PC-3 (cell line): ENCODE measurements at regions of chr9 and their contacts with region 1.

Region 1: DNA sequence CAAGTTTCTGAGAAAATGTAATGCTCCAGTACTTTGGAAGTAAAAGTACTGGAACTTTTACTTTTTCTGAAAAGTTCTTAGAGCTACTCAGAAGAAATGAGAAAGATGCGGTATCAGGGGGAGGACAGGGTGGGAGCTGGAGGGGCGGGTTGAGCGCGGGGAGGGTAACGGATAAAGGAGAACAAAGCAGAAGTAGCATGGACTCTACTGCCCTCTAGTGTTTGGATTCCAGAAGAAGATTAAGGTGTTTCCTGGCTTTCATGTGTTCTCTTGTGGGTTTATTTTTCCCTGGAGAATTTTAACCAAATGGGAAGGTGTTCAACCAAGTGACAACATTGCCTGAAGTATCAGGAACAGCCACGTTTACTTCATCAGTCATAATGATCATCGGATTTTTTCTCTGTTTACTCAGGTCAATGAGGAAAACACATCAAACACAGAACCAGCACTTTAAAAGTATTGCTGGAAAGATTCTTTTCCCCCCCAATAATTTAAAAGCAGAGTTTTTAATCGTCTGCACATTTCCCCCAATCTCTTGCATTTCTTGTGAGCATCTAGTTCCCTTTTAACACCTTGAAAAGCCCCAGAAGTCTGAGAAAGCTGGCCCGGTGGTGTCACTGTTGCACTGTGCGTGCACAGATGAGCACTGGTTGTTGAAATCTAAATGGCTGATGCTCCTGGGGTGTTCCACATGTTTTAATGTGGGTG is 190.6 kb downstream of the MPDZ start:
- DNase-seq: peak; percentile 70
- ATAC-seq: peak; percentile 90
- H3K4me3 ChIP-seq: peak overlapping the region; percentile 51
- H3K27ac ChIP-seq: no peak overlapping the region
- H3K4me1 ChIP-seq: peaks cover 9% of the 10 kb centered on the region
- H3K27me3 ChIP-seq: no peaks in the 10 kb centered on the region
- CTCF ChIP-seq: peak; percentile 66

Region 2: GRCh38 chr9:12719431-12719830 is 369.4 kb before region 1 on chr9:
- CTCF ChIA-PET with region 1: no interaction called
- POLR2A ChIA-PET with region 1: no interaction called
- intact Hi-C with region 1: loop called (anchors 1 kb)
- DNase-seq: peak; percentile 45
- ATAC-seq: no peak
- H3K4me3 ChIP-seq: no peak overlapping the region
- H3K27ac ChIP-seq: no peak overlapping the region
- H3K4me1 ChIP-seq: peaks cover 17% of the 10 kb centered on the region
- H3K27me3 ChIP-seq: no peaks in the 10 kb centered on the region
- CTCF ChIP-seq: peak; percentile 66

Region 3: GRCh38 chr9:12849486-12850004 is 239.3 kb before region 1 on chr9:
- CTCF ChIA-PET with region 1: no interaction called
- POLR2A ChIA-PET with region 1: no interaction called
- intact Hi-C with region 1: no loop called
- DNase-seq: peak; percentile 39
- ATAC-seq: peak; percentile 61
- H3K4me3 ChIP-seq: no peak overlapping the region
- H3K27ac ChIP-seq: peak overlapping the region; percentile 86
- H3K4me1 ChIP-seq: peaks cover 34% of the 10 kb centered on the region
- H3K27me3 ChIP-seq: no peaks in the 10 kb centered on the region
- CTCF ChIP-seq: no peak

Region 4: GRCh38 chr9:12972608-12973589 is 116.0 kb before region 1 on chr9:
- CTCF ChIA-PET with region 1: no interaction called
- POLR2A ChIA-PET with region 1: no interaction called
- intact Hi-C with region 1: no loop called
- DNase-seq: no peak
- ATAC-seq: no peak
- H3K4me3 ChIP-seq: no peak overlapping the region
- H3K27ac ChIP-seq: no peak overlapping the region
- H3K4me1 ChIP-seq: no peaks in the 10 kb centered on the region
- H3K27me3 ChIP-seq: no peaks in the 10 kb centered on the region
- CTCF ChIP-seq: no peak

Region 5: DNA sequence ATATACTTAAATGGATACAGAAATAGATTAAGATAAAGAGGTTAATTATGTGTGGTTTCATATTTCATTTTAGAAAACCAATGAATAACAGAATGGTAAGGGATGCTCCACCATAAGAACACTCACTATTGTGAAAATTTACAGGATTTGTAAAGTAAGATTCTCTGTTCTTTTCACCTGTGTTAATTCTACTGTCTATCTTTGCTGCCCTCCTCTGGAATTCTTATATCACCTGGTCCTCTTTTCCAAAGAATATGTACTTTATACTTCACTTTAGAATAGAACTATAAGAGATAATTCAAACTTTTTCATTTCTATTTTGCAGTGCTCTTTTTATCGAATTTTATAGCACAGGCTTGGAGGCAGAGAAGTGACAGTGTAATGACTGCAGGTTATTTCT is 100.6 kb before region 1 on chr9:
- CTCF ChIA-PET with region 1: no interaction called
- POLR2A ChIA-PET with region 1: no interaction called
- intact Hi-C with region 1: loop called (anchors 1 kb)
- DNase-seq: no peak
- ATAC-seq: no peak
- H3K4me3 ChIP-seq: no peak overlapping the region
- H3K27ac ChIP-seq: no peak overlapping the region
- H3K4me1 ChIP-seq: no peaks in the 10 kb centered on the region
- H3K27me3 ChIP-seq: no peaks in the 10 kb centered on the region
- CTCF ChIP-seq: peak; percentile 33; the same call in 1 of the 2 replicates

Region 6: DNA sequence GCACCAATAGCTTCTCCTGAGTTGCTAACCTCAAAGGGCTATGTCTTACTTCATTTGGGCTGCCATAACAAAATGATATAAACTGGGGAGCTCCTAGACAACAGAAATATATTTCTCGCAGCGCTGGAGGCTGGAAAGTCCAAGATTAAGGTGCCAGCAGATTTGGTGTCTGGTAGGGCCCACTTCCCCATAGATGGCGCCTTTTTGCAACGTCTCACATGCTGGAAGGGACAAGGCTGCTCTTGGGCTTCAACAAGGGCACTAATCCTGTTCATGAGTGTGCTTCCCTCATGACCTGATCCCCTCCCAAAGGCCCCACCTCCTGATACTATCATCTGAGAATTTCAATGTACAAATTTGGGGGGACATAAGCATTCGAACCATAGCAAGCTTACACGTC is 32.2 kb before region 1 on chr9:
- CTCF ChIA-PET with region 1: no interaction called
- POLR2A ChIA-PET with region 1: no interaction called
- intact Hi-C with region 1: no loop called
- DNase-seq: no peak
- ATAC-seq: no peak
- H3K4me3 ChIP-seq: no peak overlapping the region
- H3K27ac ChIP-seq: no peak overlapping the region
- H3K4me1 ChIP-seq: no peaks in the 10 kb centered on the region
- H3K27me3 ChIP-seq: no peaks in the 10 kb centered on the region
- CTCF ChIP-seq: 0 out of 2 replicates have a peak, but pooled peaks have one; percentile 18

Region 7: GRCh38 chr9:13100914-13101572 is 12.2 kb after region 1 on chr9:
- CTCF ChIA-PET with region 1: no interaction called
- POLR2A ChIA-PET with region 1: no interaction called
- intact Hi-C with region 1: no loop called
- DNase-seq: no peak
- ATAC-seq: no peak
- H3K4me3 ChIP-seq: no peak overlapping the region
- H3K27ac ChIP-seq: no peak overlapping the region
- H3K4me1 ChIP-seq: no peaks in the 10 kb centered on the region
- H3K27me3 ChIP-seq: no peaks in the 10 kb centered on the region
- CTCF ChIP-seq: no peak

Region 8: GRCh38 chr9:13427587-13427986 is 338.7 kb after region 1 on chr9:
- CTCF ChIA-PET with region 1: no interaction called
- POLR2A ChIA-PET with region 1: no interaction called
- intact Hi-C with region 1: loop called (anchors 5 kb)
- DNase-seq: peak; percentile 56
- ATAC-seq: no peak
- H3K4me3 ChIP-seq: no peak overlapping the region
- H3K27ac ChIP-seq: no peak overlapping the region
- H3K4me1 ChIP-seq: no peaks in the 10 kb centered on the region
- H3K27me3 ChIP-seq: no peaks in the 10 kb centered on the region
- CTCF ChIP-seq: peak; percentile 78